ENCODE measurements at regions of chr13 and their contacts with region 1.

Region 1: GRCh38 chr13:51681037-51681678 is 96.9 kb downstream of the WDFY2 start:
- DNase-seq: peak; percentile 52
- H3K27ac ChIP-seq: no peak overlapping the region
- CTCF ChIP-seq: no peak

Region 2: GRCh38 chr13:51444922-51445321 is 236.2 kb before region 1 on chr13:
- CTCF ChIA-PET with region 1: no interaction called
- POLR2A ChIA-PET with region 1: interaction called, 14 read pairs
- DNase-seq: no peak
- H3K27ac ChIP-seq: no peak overlapping the region
- CTCF ChIP-seq: peak; percentile 45

Region 3: DNA sequence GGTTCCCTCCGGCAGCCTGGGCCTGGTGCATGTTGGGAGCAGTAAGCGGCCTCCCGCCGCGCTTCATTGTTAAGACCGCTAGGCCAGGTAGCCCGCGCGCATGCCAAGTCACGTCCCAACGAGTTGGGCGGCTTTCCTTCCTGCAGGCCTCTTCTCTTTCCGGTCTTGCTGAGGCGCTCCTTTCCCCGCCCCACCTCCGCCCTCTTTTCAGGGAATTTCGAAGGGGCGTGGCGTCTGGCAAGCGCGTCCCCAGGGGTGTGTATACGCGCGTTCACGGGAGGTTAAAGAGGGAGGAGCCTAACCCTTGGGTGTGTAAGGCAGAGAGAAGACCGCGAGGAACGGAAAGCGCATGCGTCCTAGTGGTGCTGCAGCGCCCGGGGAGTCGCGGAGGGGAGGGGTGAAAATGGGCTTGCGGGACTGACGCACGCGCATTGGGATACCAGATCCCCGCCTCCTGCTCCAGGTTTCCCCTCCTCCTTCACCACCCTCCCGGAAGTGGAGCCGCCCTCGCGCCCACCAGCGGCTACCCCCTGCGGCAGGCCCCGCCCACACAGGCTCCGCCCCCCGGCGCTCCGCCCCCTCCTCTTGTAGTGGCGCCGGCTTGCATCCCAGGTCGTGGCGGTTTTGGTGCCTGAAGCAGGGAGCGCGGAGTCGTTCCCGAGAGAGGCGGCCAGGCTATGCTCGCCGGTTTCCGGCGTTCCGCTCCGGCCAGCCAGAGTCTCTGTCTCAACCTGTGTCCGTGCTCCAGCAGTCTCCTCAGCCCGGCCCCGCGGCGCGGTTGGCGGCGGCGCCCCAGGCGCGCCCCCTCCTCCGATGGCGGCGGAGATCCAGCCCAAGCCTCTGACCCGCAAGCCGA is 97.1 kb before region 1 on chr13 and contains the start of gene WDFY2:
- CTCF ChIA-PET with region 1: no interaction called
- POLR2A ChIA-PET with region 1: no interaction called
- DNase-seq: peak; percentile 98
- H3K27ac ChIP-seq: peak within 1 kb of the TSS; percentile 99
- CTCF ChIP-seq: no peak

Region 4: DNA sequence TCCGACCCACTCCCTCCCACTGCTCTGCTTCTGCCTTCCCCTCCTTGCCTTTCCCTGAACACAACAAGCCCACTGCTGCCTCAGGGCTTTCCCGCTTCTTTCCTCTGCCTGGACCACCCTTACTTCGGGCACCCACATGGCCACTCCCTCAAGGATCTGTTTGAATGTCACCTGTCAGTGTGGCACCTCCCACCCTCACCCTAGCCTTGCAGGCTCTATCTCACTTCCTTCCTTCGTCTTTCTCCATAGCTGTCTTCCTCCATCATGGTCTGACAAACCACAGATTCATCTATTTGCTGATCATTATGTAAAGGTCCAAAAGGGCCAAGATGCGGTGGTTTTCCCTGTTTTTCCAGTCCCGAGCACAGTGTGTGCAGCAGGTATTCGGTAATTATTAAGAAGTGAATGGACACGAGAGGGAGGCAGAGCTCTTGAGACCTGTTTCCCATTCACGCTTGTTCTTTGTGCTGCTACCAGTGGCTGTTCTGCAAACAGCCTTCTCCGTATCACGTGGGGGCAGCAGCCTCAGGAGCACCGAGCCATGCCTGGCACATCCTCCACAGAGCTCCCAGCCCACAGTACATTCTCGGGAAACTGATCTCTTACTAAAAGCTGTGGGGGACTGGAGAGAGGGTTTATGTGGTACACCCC is 230.8 kb after region 1 on chr13:
- CTCF ChIA-PET with region 1: no interaction called
- POLR2A ChIA-PET with region 1: no interaction called
- DNase-seq: no peak
- H3K27ac ChIP-seq: no peak overlapping the region
- CTCF ChIP-seq: no peak